ENCODE measurements at regions of chr17 and their contacts with region 1.

Region 1: GRCh38 chr17:60435244-60436167 is 13.2 kb downstream of the CHCT1 start:
- DNase-seq: no peak
- ATAC-seq: peak; percentile 96

Region 2: GRCh38 chr17:60036796-60037612 is 398.5 kb before region 1 on chr17:
- intact Hi-C with region 1: loop called (anchors 5 kb)
- DNase-seq: peak; percentile 88
- ATAC-seq: peak; percentile 87

Region 3: DNA sequence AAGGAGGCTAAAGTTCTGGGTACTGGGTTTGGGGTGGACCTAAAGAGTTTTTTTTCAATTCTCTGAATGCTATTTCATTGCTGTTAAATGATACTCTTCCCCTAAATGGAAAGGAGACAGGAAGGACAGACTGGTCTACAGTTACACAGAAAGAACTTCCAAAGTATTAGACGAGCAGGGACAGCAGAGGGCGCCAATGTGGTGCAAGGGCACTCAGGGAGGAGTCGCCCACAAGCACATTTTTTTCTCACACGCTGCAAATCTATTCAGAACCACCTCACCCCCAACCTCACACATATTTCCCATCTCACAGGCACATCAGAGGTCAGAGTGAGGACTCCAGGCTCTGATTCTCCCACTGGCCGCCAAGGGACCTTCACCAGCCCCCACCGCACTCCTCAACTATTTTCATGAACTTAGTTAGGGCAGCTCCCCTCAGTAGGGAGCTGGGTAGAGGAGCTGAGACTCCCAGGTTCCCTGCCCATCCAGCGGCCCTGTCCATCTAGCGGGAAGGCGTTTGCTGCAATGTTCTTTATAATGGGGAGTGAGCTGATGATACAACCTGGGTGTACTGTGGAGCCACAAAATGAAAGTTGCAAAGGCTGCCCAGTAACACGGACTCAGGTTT is 292.5 kb before region 1 on chr17:
- intact Hi-C with region 1: loop called (anchors 2 kb)
- DNase-seq: peak; percentile 88
- ATAC-seq: peak; percentile 59

Region 4: GRCh38 chr17:60630352-60630751 is 194.8 kb after region 1 on chr17:
- intact Hi-C with region 1: no loop called
- DNase-seq: no peak
- ATAC-seq: no peak

Measured in Right ventricle myocardium inferior (tissue), 1 donor.